ENCODE measurements at regions of chr2 and their contacts with region 1.

Region 1: DNA sequence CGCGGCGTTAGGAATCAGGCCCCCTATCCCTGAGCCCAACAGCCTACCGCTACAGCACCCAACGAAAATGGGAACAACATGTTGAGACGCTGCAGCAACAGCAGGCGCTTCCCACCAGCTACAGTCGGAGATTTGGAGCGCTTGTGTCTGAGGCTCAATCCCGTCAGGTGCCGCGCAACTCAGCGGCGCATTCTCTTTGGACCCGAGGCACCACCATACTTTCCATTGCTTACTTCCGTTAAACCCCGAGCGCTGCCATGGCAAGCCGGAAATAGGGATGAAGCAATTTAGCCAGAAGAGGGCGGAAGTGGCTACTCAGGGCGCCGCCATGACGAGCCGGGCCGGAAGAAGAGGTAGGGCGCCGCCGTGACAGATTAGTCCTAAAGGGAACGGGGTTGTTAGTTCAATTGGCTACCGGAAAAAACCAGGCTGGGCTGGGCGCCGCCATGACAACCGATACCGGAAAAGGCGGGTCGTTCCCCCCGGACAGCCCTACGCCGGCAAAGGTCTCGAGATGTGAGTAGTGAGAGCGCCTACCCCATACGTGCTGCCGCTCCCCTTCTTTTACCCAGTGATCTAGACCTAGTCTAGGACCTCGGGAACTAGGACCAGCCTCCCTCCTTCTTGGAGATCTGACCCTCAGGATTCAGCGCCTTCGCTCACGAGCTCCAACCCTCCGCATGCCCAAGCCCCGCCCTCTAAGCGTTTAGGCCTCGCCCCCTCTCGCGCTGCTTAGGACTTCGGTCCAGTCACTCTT is at the start of gene CHCHD5:
- DNase-seq: peak; percentile 98
- H3K4me3 ChIP-seq: peak within 1 kb of the TSS; percentile 53 to 82 (median 73)
- H3K27ac ChIP-seq: peak within 1 kb of the TSS; percentile 89 to 94 (median 92)
- H3K4me1 ChIP-seq: peaks cover 27 to 34% (median 28%) of the 10 kb centered on the region in 4 donors
- H3K27me3 ChIP-seq: no peaks in the 10 kb centered on the region
- CTCF ChIP-seq: peak; percentile 13 to 42 (median 25)
- EP300 ChIP-seq: no peak
- POLR2A ChIP-seq: peak; percentile 19
- total RNA-seq, gene CHCHD5: 12.0 to 21.9 (median 16.1) TPM

Region 2: DNA sequence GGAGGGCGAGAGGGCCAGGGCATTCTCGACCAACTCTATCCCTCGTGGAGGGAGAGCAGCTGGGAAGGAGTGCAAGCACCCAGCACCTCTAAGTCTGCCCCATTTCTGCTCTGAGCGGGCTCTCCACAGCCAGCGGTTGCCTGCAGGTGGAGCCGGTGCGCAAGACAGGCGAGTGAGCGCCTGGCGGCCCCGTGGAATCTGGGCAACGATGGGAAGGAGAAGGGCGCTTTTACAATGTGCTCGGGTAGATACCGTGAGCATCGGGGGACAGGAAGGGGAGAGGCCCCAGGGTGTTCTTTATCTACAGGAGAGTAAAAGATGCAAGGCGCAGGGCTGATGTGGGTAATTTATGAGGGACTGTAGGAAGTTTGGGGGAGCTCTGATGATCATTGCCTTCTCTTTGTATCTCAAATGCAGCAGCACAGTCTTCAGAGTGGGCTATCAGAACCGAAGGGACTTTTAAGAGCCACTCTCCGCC is 103.2 kb before region 1 on chr2:
- intact Hi-C with region 1: loop called (anchors 2 kb)
- DNase-seq: peak; percentile 96
- H3K4me3 ChIP-seq: peak overlapping the region; percentile 80 to 94 (median 86)
- H3K27ac ChIP-seq: peak overlapping the region; percentile 86 to 91 (median 88)
- H3K4me1 ChIP-seq: peaks cover 18 to 30% (median 28%) of the 10 kb centered on the region in 4 donors
- H3K27me3 ChIP-seq: peaks cover 0 to 3% (median 0%) of the 10 kb centered on the region in 4 donors
- CTCF ChIP-seq: peak; percentile 69 to 90 (median 83)
- EP300 ChIP-seq: no peak
- POLR2A ChIP-seq: no peak

Region 3: GRCh38 chr2:112542123-112542983 is 42.0 kb before region 1 on chr2 and contains the start of gene POLR1B:
- intact Hi-C with region 1: loop called (anchors 5 kb)
- DNase-seq: peak; percentile 96
- H3K4me3 ChIP-seq: peak within 1 kb of the TSS; percentile 81 to 99 (median 85)
- H3K27ac ChIP-seq: peak within 1 kb of the TSS; percentile 86 to 90 (median 88)
- H3K4me1 ChIP-seq: peaks cover 13 to 24% (median 19%) of the 10 kb centered on the region in 4 donors
- H3K27me3 ChIP-seq: peaks cover 0 to 7% (median 0%) of the 10 kb centered on the region in 4 donors
- CTCF ChIP-seq: no peak
- EP300 ChIP-seq: no peak
- POLR2A ChIP-seq: no peak
- total RNA-seq, gene POLR1B: 10.0 to 12.4 (median 10.2) TPM

Region 4: GRCh38 chr2:112645310-112646101 is 61.2 kb after region 1 on chr2 and contains the start of gene SLC20A1:
- intact Hi-C with region 1: loop called (anchors 2 kb)
- DNase-seq: peak; percentile 97
- H3K4me3 ChIP-seq: peak within 1 kb of the TSS; percentile 89 to 97 (median 93)
- H3K27ac ChIP-seq: peak within 1 kb of the TSS; percentile 98 to 100 (median 99)
- H3K4me1 ChIP-seq: peaks cover 35 to 54% (median 49%) of the 10 kb centered on the region in 4 donors
- H3K27me3 ChIP-seq: no peaks in the 10 kb centered on the region
- CTCF ChIP-seq: peak in 1 of 3 experiments; percentile 38
- EP300 ChIP-seq: no peak
- POLR2A ChIP-seq: peak; percentile 94
- total RNA-seq, gene SLC20A1: 12.0 to 34.1 (median 14.9) TPM

Region 5: GRCh38 chr2:113192438-113193100 is 608.3 kb after region 1 on chr2:
- intact Hi-C with region 1: no loop called
- DNase-seq: no peak
- H3K4me3 ChIP-seq: no peak overlapping the region
- H3K27ac ChIP-seq: no peak overlapping the region
- H3K4me1 ChIP-seq: no peaks in the 10 kb centered on the region
- H3K27me3 ChIP-seq: no peaks in the 10 kb centered on the region
- CTCF ChIP-seq: no peak
- EP300 ChIP-seq: no peak
- POLR2A ChIP-seq: no peak